Naive thymus-derived CD8-positive, alpha-beta T cell (primary cell): ENCODE measurements at regions of chr12 and their contacts with region 1.

Region 1: DNA sequence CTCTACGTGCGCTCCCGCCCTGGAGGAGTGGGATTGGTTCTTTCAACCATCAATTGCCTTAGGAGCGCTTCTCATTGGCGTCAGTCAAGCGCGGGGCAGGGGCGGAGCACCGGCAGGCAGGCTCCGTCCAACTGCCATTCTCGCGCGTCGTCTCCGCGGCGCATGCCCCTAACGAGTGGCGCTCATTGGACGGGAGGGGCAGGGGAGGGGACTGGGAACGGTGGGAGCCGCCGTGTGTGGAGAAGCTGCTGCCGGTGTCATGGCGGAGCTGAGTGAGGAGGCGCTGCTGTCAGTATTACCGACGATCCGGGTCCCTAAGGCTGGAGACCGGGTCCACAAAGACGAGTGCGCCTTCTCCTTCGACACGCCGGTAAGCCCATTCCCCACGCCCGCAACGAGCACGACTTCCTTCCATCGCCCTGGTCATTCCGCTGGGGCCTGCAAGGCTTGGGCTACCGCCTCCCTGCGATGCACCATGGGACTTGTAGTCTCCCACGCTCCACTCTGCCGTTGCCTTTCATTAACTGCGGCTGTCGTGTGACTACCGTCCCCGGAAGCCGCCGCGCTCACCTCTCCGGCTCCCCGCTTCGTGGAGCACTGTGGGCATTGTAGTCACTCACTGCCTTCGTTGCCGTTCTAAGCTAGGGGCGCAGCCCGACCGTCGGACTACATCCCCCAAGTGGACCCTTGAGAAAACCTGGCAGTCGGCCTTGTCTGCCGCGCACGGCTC is at the start of gene USP5:
- DNase-seq: peak; percentile 95 to 99 (median 99)
- ATAC-seq: peak; percentile 76 to 80
- H3K4me3 Mint-ChIP-seq: peak within 1 kb of the TSS; percentile 86 to 100 (median 96)
- H3K27ac Mint-ChIP-seq: peak within 1 kb of the TSS; percentile 91 to 100 (median 99)
- H3K4me1 Mint-ChIP-seq: peaks cover 20 to 33% (median 25%) of the 10 kb centered on the region in 4 donors
- H3K27me3 Mint-ChIP-seq: no peaks in the 10 kb centered on the region
- polyA plus RNA-seq, gene USP5: 55.3 to 69.2 (median 56.7) TPM

Region 2: GRCh38 chr12:6592087-6592486 is 260.0 kb before region 1 on chr12:
- POLR2A ChIA-PET with region 1: no interaction called
- DNase-seq: no peak
- ATAC-seq: peak in 1 of 2 donors; percentile 10
- H3K4me3 Mint-ChIP-seq: no peak overlapping the region
- H3K27ac Mint-ChIP-seq: peak overlapping the region in 6 of 10 donors; percentile 22 to 72 (median 51)
- H3K4me1 Mint-ChIP-seq: peaks cover 0 to 30% (median 16%) of the 10 kb centered on the region in 4 donors
- H3K27me3 Mint-ChIP-seq: no peaks in the 10 kb centered on the region

Region 3: GRCh38 chr12:6672143-6672542 is 179.9 kb before region 1 on chr12:
- POLR2A ChIA-PET with region 1: no interaction called
- DNase-seq: no peak
- ATAC-seq: no peak
- H3K4me3 Mint-ChIP-seq: no peak overlapping the region
- H3K27ac Mint-ChIP-seq: peak overlapping the region in 3 of 10 donors; percentile 7 to 60 (median 57)
- H3K4me1 Mint-ChIP-seq: peaks cover 0 to 3% (median 1%) of the 10 kb centered on the region in 4 donors
- H3K27me3 Mint-ChIP-seq: no peaks in the 10 kb centered on the region

Region 4: DNA sequence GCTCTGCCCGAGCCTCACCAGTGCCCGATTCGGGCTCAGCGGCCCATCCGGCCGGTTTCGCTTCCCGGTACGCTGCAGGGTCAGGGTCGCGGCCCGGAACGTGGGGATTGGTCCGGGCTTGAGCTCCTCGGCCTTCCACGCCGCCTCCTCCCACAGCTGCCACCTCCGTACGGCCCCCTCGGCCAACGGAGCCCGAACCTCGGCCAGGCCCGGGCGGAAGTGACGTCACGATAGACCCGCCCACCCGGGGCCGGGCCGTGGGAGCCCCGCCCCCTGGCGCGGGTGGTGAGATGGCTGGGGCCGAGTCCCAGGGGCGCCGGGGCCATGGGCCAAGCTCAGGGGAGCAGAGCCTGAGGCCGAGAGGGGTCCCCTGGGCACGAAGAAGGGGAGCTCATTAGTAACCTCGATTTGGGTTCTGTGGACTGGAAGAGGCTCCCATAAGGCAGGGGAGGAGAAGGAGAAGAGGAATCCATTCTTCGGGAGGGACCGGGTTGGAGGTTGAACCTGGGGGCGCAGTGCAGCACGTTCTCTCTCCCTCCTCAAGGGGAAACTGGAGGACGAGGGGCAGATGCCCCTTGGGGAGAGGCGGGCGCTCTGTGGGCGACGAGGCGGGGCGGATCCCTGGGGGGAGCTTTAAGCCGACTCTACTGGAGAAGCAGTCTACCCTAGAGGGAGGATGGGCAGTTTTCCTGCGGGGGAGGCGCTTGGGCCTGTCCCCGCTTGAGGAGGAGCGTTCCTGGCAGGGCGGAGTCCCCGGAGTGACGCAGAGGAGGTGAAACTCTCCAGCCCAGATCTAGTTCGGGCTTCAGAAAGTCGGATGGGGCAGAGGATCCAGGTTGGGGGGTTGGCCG is 98.9 kb before region 1 on chr12 and contains the start of gene MLF2:
- POLR2A ChIA-PET with region 1: interaction called, 16 read pairs
- DNase-seq: peak; percentile 93 to 98 (median 96)
- ATAC-seq: peak; percentile 92 to 95
- H3K4me3 Mint-ChIP-seq: peak within 1 kb of the TSS; percentile 92 to 98 (median 94)
- H3K27ac Mint-ChIP-seq: peak within 1 kb of the TSS; percentile 95 to 100 (median 98)
- H3K4me1 Mint-ChIP-seq: peaks cover 11 to 36% (median 24%) of the 10 kb centered on the region in 4 donors
- H3K27me3 Mint-ChIP-seq: peaks cover 0 to 2% (median 0%) of the 10 kb centered on the region in 5 donors
- polyA plus RNA-seq, gene MLF2: 98.5 to 133 (median 126) TPM

Region 5: GRCh38 chr12:6792522-6793201 is 59.4 kb before region 1 on chr12:
- POLR2A ChIA-PET with region 1: no interaction called
- DNase-seq: peak; percentile 17 to 77 (median 54)
- ATAC-seq: peak; percentile 95 to 97
- H3K4me3 Mint-ChIP-seq: peak overlapping the region; percentile 29 to 83 (median 70)
- H3K27ac Mint-ChIP-seq: peak overlapping the region; percentile 45 to 86 (median 74)
- H3K4me1 Mint-ChIP-seq: peaks cover 20 to 46% (median 36%) of the 10 kb centered on the region in 4 donors
- H3K27me3 Mint-ChIP-seq: peaks cover 0 to 12% (median 0%) of the 10 kb centered on the region in 5 donors

Region 6: GRCh38 chr12:6867413-6868210 is 15.5 kb after region 1 on chr12 and contains the start of gene TPI1:
- POLR2A ChIA-PET with region 1: interaction called, 119 read pairs
- DNase-seq: peak in 9 of 10 donors; percentile 38 to 87 (median 60)
- ATAC-seq: peak; percentile 70 to 72
- H3K4me3 Mint-ChIP-seq: peak within 1 kb of the TSS; percentile 84 to 95 (median 88)
- H3K27ac Mint-ChIP-seq: peak within 1 kb of the TSS; percentile 84 to 96 (median 89)
- H3K4me1 Mint-ChIP-seq: peaks cover 33 to 62% (median 52%) of the 10 kb centered on the region in 4 donors
- H3K27me3 Mint-ChIP-seq: no peaks in the 10 kb centered on the region
- polyA plus RNA-seq, gene TPI1: 372 to 497 (median 479) TPM

Region 7: DNA sequence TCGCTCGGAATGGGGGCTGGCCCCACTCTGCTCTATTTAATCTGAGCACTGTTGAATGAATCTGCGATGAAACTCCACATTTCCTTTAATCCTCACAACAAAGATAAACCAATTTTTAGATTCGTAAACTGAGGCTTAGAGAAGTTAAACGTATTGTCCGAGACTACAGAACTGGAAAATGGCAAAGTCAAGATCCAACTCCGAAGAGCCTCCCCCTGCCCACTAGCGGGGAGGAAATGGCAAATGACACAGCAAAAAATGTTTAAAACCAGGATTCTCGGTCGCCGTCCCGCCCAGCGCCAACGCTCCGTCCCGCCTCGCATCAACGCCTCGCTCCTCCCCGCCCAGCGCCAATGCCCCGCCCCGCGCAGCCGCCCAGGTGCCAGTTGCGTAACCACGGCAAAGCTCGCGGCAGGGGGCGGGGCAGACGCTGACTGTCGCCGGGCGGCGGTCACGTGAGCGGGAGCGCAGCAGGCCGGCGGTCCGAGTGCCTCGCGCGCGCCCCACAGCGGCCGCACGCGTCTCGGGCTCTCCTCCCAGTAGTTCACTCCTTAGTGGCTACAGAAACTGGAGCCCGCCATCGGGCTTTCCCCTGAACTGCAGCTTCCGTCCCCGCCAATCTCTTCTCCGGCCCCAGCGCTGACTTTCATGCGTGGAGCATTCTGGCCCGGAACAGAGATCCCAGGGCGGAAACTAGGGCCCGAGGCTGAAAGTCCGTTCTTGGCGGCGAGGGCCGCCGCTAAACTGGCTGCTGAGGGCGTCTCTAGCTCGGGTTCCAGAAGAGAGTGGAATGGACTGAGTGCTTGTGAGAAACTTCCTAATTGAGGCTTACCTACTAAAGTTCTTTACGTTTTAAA is 38.9 kb after region 1 on chr12:
- POLR2A ChIA-PET with region 1: interaction called, 26 read pairs
- DNase-seq: peak; percentile 92 to 100 (median 97)
- ATAC-seq: peak; percentile 94 to 95
- H3K4me3 Mint-ChIP-seq: peak overlapping the region; percentile 77 to 90 (median 84)
- H3K27ac Mint-ChIP-seq: peak overlapping the region; percentile 88 to 96 (median 94)
- H3K4me1 Mint-ChIP-seq: peaks cover 0 to 17% (median 15%) of the 10 kb centered on the region in 4 donors
- H3K27me3 Mint-ChIP-seq: no peaks in the 10 kb centered on the region

Region 8: DNA sequence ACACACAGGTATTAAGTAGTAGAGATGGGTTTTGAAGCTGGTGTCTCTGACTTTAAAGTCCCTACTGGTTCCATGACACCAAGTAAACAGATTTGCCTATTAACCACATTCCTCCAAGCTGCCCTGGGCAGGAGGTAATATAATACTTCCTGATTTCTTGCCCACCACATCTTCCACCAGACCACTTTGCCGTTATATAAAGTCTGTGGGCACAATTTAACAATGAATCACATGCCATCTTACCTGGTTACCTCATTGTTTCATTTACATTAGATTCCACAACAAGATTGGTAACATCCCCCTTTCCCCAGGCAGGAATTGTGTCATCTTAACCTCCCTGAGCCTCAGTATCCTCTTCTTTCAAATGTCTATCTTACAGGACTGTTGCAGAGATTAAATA is 51.7 kb after region 1 on chr12:
- POLR2A ChIA-PET with region 1: no interaction called
- DNase-seq: no peak
- ATAC-seq: no peak
- H3K4me3 Mint-ChIP-seq: peak overlapping the region in 2 of 10 donors; percentile 9 to 45
- H3K27ac Mint-ChIP-seq: no peak overlapping the region
- H3K4me1 Mint-ChIP-seq: peaks cover 0 to 9% (median 5%) of the 10 kb centered on the region in 4 donors
- H3K27me3 Mint-ChIP-seq: no peaks in the 10 kb centered on the region

Region 9: GRCh38 chr12:6937481-6938297 is 85.6 kb after region 1 on chr12:
- POLR2A ChIA-PET with region 1: interaction called, 35 read pairs
- DNase-seq: peak; percentile 87 to 96 (median 92)
- ATAC-seq: peak; percentile 85 to 93
- H3K4me3 Mint-ChIP-seq: peak overlapping the region; percentile 72 to 91 (median 86)
- H3K27ac Mint-ChIP-seq: peak overlapping the region; percentile 89 to 98 (median 98)
- H3K4me1 Mint-ChIP-seq: peaks cover 29 to 53% (median 48%) of the 10 kb centered on the region in 4 donors
- H3K27me3 Mint-ChIP-seq: no peaks in the 10 kb centered on the region

Region 10: GRCh38 chr12:6965026-6965661 is 113.1 kb after region 1 on chr12:
- POLR2A ChIA-PET with region 1: interaction called, 12 read pairs
- DNase-seq: peak; percentile 77 to 93 (median 86)
- ATAC-seq: peak; percentile 46 to 61
- H3K4me3 Mint-ChIP-seq: peak overlapping the region in 4 of 10 donors; percentile 15 to 48 (median 30)
- H3K27ac Mint-ChIP-seq: peak overlapping the region; percentile 79 to 95 (median 90)
- H3K4me1 Mint-ChIP-seq: peaks cover 31 to 64% (median 62%) of the 10 kb centered on the region in 4 donors
- H3K27me3 Mint-ChIP-seq: no peaks in the 10 kb centered on the region